Activated T-helper 2 cell treated with anti-CD3 and anti-CD28 coated beads, Interferon-gamma antibody, Interleukin-2, Interleukin-4, amounts not matched to agents 10 μg/mL and 5 μg/mL and 100 μg/mL, durations not matched to agents 14 hours and 24 hours and 36 hours (primary cell): ENCODE measurements at regions of chr20 and their contacts with region 1.

Region 1: GRCh38 chr20:10219452-10219791 is 792 bp downstream of the SNAP25 start:
- DNase-seq: peak; percentile 69
- H3K4me3 Mint-ChIP-seq: peak overlapping the region; percentile 79
- H3K27ac Mint-ChIP-seq: no peak overlapping the region
- H3K4me1 Mint-ChIP-seq: peaks cover 33% of the 10 kb centered on the region
- H3K27me3 Mint-ChIP-seq: peaks cover 5% of the 10 kb centered on the region

Region 2: GRCh38 chr20:9974325-9974724 is 245.1 kb before region 1 on chr20:
- intact Hi-C with region 1: no loop called
- DNase-seq: no peak
- H3K4me3 Mint-ChIP-seq: no peak overlapping the region
- H3K27ac Mint-ChIP-seq: no peak overlapping the region
- H3K4me1 Mint-ChIP-seq: peaks cover 6% of the 10 kb centered on the region
- H3K27me3 Mint-ChIP-seq: peaks cover 11% of the 10 kb centered on the region

Region 3: GRCh38 chr20:10115021-10115420 is 104.4 kb before region 1 on chr20:
- intact Hi-C with region 1: loop called (anchors 10 kb)
- DNase-seq: no peak
- H3K4me3 Mint-ChIP-seq: no peak overlapping the region
- H3K27ac Mint-ChIP-seq: no peak overlapping the region
- H3K4me1 Mint-ChIP-seq: peaks cover 18% of the 10 kb centered on the region
- H3K27me3 Mint-ChIP-seq: no peaks in the 10 kb centered on the region

Region 4: GRCh38 chr20:10306440-10307358 is 87.3 kb after region 1 on chr20:
- intact Hi-C with region 1: loop called (anchors 5 kb)
- DNase-seq: no peak
- H3K4me3 Mint-ChIP-seq: no peak overlapping the region
- H3K27ac Mint-ChIP-seq: no peak overlapping the region
- H3K4me1 Mint-ChIP-seq: peaks cover 24% of the 10 kb centered on the region
- H3K27me3 Mint-ChIP-seq: peaks cover 51% of the 10 kb centered on the region

Region 5: DNA sequence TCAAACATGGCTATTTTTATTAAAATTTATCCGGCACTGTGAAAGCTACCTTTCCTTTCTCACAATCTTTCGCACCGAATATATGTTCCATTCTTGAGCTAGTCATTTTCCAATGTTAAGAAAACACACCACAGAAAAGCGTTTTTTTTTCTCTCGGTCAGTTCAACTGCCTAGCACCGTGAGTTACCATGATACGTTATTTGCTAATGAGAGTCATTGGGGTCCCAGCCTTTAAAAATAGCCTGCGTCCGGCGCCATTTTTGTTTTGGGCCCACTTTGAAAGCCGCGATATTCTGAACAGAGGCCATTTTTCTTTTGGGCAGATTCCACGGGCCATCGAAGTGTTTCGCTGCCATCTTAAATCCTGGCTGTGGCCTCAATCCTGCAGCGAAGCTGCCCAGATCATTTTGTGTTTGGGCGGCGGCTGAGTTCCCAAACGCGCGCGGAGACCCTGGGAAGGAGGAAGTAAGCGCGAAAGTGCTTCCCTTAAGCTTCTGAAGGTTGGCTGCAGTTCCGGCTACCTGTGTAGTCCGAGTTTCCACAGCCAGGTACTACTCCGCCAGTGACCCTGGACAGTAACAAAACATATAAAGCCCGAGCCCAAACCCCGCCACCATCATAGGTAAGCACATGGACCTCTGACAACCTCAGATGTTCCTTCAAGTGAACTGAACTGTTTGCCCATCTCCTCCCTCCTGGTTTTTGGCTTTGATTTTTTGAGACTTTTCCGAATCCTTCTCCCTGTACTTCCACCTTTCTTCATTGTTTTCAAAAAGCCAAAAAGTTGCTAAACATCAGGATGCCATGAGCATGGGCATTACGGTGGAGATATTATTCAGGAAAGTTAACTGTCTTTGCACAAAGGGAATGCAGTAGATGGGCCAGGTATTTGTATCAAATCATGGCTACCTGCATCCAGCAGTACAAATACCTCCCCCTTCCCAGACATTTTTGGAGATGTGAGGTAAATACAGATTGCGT is 215.7 kb after region 1 on chr20 and contains the start of gene SLX4IP:
- intact Hi-C with region 1: loop called (anchors 1 kb)
- DNase-seq: peak; percentile 78
- H3K4me3 Mint-ChIP-seq: peak within 1 kb of the TSS; percentile 97
- H3K27ac Mint-ChIP-seq: peak within 1 kb of the TSS; percentile 97
- H3K4me1 Mint-ChIP-seq: peaks cover 59% of the 10 kb centered on the region
- H3K27me3 Mint-ChIP-seq: no peaks in the 10 kb centered on the region
- total RNA-seq, gene SLX4IP: 6.3 and 6.4 TPM in 2 replicates

Region 6: GRCh38 chr20:10673988-10674711 is 454.7 kb after region 1 on chr20 and contains the start of gene JAG1:
- intact Hi-C with region 1: loop called (anchors 5 kb)
- DNase-seq: peak; percentile 78
- H3K4me3 Mint-ChIP-seq: peak within 1 kb of the TSS; percentile 92
- H3K27ac Mint-ChIP-seq: peak within 1 kb of the TSS; percentile 87
- H3K4me1 Mint-ChIP-seq: peaks cover 30% of the 10 kb centered on the region
- H3K27me3 Mint-ChIP-seq: peaks cover 68% of the 10 kb centered on the region
- total RNA-seq, gene JAG1: 2.8 and 3.1 TPM in 2 replicates